ENCODE measurements at regions of chr6 and their contacts with region 1.

Region 1: GRCh38 chr6:132973514-132973993 is 159.2 kb downstream of the RPS12 start:
- DNase-seq: no peak
- H3K4me3 ChIP-seq: no peak overlapping the region
- CTCF ChIP-seq: no peak

Region 2: GRCh38 chr6:132962936-132963868 is 10.4 kb before region 1 on chr6:
- CTCF ChIA-PET with region 1: interaction called, 22 read pairs
- POLR2A ChIA-PET with region 1: no interaction called
- DNase-seq: no peak
- H3K4me3 ChIP-seq: no peak overlapping the region
- CTCF ChIP-seq: peak; percentile 79

Measured in AG04449 (cell line).